Activated CD4-positive, alpha-beta memory T cell treated with anti-CD3 and anti-CD28 coated beads for 36 hours (primary cell): ENCODE measurements at regions of chr21 and their contacts with region 1.

Region 1: DNA sequence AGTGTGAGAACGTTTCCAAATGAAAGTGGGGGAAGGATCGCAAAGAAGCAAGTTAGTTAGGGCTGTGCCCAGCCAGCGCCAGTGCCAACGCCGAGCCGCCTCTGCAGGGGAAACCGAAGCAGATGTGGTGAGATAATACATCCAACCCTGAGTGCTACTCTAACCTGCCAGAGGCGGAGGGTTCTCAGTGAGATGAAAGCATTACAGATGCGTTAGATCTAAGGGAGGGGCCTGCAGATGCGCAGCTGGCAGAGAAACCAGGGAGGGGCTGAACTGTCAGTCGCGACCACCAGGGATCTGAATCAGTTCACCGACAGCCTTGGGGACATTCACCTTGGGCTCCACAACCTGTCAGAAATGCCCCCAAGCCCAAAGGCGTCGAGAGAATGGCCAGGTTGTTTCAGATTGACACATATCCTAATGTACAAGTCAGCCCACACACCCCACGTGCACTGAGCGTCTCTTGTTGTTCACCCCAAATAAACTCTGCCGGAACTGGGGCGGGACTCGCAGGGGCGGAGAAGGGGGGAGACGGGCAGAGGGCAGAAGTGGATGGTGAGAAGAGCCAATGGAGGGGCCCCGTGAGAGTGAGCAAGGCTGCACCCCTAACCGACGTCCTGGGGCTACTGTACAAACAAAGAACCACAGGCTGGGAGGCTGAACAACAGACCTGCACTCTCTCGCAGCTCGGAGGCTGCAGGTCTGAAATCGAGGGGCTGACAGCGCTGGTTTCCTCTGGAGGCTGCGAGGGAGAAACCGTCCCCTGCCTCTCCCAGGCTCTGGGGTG is 8.7 kb upstream of the UMODL1 start:
- DNase-seq: peak; percentile 89
- H3K4me3 Mint-ChIP-seq: peak overlapping the region; percentile 60
- H3K27ac Mint-ChIP-seq: peak overlapping the region; percentile 34
- H3K4me1 Mint-ChIP-seq: peaks cover 43% of the 10 kb centered on the region
- H3K27me3 Mint-ChIP-seq: no peaks in the 10 kb centered on the region

Region 2: DNA sequence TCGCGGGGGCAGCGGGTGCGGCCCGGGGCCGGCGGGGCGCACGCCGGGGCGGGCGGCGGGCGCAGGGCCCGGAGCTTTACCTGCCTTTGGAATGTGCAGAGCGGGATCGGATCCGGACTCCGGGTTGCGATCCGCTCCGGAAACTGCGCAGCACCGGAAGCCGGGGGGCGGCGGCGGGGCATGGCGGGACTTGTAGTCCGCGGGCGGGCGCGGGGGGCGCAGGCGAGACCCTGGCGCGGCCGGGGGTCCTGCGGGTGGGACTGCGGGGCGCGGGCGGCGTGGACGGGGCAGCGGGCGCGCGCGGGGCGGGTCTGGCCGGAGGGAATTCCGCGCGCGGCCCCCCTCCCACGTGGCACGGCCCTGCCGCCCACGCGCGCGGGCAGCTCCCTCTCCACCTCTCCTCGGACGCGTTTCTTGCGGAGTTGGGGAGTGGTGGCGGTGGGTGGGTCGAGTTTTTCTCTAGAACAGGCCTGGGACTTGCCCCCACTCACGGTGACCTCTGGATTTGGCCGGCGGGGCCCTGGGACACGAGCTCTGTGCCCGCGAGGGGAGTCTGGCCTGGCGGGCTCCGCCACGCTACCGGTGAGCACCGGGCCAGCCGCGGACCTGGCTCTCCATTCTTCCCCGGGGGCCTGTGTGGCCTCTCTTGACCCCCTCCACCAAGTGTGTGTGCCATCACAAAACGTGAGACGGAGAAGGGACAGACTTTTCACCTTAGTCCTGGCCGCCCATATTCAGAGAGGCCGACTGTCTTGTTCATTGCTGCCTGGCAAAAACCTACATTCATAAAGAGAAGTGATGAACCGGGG is 183.0 kb before region 1 on chr21 and contains the start of gene PRDM15:
- CTCF ChIA-PET with region 1: interaction called, 3 read pairs
- POLR2A ChIA-PET with region 1: no interaction called
- intact Hi-C with region 1: loop called (anchors 2 kb)
- DNase-seq: peak; percentile 88
- H3K4me3 Mint-ChIP-seq: peak within 1 kb of the TSS; percentile 85
- H3K27ac Mint-ChIP-seq: peak within 1 kb of the TSS; percentile 94
- H3K4me1 Mint-ChIP-seq: peaks cover 21% of the 10 kb centered on the region
- H3K27me3 Mint-ChIP-seq: no peaks in the 10 kb centered on the region
- total RNA-seq, gene PRDM15: 8.5 to 9.9 TPM

Region 3: GRCh38 chr21:41926117-41926806 is 136.2 kb before region 1 on chr21:
- CTCF ChIA-PET with region 1: no interaction called
- POLR2A ChIA-PET with region 1: no interaction called
- intact Hi-C with region 1: loop called (anchors 2 kb)
- DNase-seq: peak; percentile 36
- H3K4me3 Mint-ChIP-seq: peak overlapping the region; percentile 89
- H3K27ac Mint-ChIP-seq: peak overlapping the region; percentile 96
- H3K4me1 Mint-ChIP-seq: peaks cover 52% of the 10 kb centered on the region
- H3K27me3 Mint-ChIP-seq: no peaks in the 10 kb centered on the region

Region 4: DNA sequence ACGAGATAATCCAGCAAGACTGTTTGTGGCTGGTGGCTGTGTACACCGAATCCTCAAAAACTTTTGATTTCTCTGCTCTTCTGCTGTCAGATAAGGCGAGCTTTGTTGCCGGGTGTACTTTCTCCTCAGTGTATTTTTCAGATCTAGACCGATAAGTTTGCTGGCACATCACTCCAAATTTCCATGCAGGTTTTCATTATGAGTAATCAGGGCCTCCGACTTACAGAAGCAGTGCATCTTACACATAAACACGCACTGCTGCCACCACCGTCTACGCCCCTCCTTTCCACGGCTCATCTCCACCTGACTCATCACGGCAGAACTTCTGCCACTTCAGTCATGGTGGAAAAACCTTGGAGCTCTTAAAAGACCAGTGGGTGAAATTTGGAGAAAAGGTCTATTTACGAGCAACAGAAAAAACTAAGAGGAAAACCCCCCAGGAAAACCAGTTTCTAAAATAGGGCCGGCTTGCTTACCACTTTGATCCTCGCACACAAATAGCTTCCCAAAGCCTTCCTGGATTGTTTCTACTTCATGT is 59.9 kb before region 1 on chr21:
- CTCF ChIA-PET with region 1: no interaction called
- POLR2A ChIA-PET with region 1: interaction called, 4 read pairs
- intact Hi-C with region 1: loop called (anchors 1 kb)
- DNase-seq: peak; percentile 92
- H3K4me3 Mint-ChIP-seq: peak overlapping the region; percentile 37
- H3K27ac Mint-ChIP-seq: peak overlapping the region; percentile 86
- H3K4me1 Mint-ChIP-seq: peaks cover 61% of the 10 kb centered on the region
- H3K27me3 Mint-ChIP-seq: no peaks in the 10 kb centered on the region

Region 5: DNA sequence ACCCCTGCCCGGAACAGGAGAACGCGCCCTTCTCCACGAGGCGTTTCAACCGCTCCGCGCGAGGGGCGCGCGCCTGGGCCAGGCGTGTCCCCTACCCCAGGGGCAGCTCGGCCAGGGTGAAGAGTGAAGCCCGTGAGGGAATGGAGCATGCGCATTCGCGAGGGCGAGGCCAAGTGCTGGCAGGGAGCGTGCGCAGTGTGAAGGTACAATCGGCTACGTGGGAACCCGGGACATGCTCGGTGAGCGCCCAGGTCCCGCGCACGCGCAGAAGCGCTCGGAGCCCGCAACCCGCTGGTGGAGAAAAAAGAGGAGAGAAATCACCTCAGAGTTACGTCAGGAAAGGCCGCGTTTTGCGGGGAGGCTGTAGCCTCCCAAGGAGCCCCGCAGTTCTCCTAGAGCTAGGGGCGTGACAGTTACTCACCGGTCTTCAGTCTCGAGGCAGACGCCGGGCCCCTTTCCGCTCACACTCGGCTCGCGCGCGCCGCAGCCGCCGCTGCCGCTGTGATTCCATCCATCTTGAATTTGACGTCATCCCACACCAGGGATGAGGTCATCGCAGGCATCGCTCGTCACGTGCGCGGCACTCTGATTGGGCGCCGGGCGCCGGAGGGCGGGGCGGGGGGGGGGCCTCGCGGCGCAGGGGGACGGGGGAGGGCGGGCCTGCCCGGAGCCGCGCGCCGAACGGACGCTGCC is 52.5 kb before region 1 on chr21 and contains the start of gene ZBTB21:
- CTCF ChIA-PET with region 1: no interaction called
- POLR2A ChIA-PET with region 1: interaction called, 6 read pairs
- intact Hi-C with region 1: loop called (anchors 1 kb)
- DNase-seq: peak; percentile 99
- H3K4me3 Mint-ChIP-seq: peak within 1 kb of the TSS; percentile 88
- H3K27ac Mint-ChIP-seq: peak within 1 kb of the TSS; percentile 99
- H3K4me1 Mint-ChIP-seq: peaks cover 27% of the 10 kb centered on the region
- H3K27me3 Mint-ChIP-seq: no peaks in the 10 kb centered on the region
- total RNA-seq, gene ZBTB21: 23.6 to 24.1 TPM